GM10248 (cell line): ENCODE measurements at regions of chr7 and their contacts with region 1.

Region 1: DNA sequence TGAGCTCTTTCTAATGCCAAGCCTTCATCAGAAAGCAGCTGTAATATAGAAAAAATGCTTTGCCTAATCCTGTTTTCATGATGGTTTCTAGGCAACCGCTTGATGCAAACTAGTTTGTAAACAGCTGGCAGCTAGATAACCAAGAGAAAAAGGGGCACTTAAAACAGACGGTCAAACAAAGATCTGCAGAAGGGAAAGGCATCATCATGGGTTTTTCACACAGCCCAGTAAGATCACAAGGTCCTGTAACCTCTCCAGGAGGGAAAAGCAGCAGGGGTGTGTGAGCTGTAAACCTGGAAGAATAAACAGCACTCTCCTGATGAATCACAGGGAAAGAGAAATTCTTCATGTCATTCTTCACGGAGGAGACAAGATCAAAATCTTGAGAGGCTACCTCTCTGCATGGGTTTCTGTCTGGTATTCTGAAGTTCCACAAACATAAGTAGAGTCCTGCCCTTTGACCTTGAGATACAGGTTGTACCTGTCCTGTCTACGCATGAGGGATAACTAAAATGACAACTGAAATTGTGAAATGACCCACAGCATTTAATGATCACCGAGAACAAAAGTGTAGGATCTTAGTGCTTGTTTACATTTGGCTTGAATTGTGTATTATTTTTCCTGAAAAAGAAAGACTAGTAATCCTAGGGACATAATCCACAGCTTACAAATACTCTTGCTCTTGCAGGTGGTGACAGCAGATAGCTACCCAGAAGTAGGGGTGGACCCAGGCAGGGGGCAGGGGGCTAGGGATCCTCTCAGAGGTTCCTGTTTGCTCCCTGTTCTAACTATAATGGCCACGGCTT is 48.0 kb downstream of the CREB3L2 start:
- DNase-seq: no peak
- CTCF ChIP-seq: no peak

Region 2: GRCh38 chr7:137943147-137943551 is 10.7 kb before region 1 on chr7:
- CTCF ChIA-PET with region 1: interaction called, 53 read pairs
- POLR2A ChIA-PET with region 1: no interaction called
- DNase-seq: no peak
- CTCF ChIP-seq: no peak

Region 3: DNA sequence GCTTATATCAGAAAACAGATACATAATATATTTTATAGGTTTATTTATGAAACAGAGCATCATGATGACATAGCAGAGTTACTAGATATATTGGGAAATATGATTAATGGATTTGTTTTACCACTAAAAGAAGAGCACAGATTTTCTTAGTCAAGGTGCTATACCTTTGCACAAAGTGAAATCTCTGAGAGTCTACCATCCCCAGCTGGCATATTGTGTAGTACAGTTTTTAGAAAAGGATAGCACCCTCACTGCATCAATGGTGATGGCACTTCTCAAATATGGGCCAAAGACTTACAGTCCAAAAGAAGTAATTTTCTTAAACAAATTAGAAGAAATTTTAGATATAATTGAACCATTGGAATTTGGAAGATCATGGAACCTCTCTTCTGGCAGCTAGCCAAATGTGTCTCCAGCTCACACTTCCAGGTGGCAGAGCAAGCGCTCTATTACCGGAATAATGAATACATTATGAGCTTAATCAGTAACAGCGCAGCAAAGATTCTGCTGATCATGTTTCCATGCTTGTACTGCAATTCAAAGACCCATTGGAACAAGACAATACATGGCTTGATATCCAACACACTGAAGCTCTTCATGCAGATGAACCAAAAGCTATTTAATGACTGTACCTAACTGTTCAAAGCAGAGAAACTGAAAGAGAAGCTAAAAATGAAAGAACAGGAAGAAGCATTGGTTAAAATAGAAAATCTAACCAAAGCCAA is 69.9 kb after region 1 on chr7:
- CTCF ChIA-PET with region 1: no interaction called
- POLR2A ChIA-PET with region 1: no interaction called
- DNase-seq: peak; percentile 55
- CTCF ChIP-seq: no peak